A673 (cell line): ENCODE measurements at regions of chr12 and their contacts with region 1.

Region 1: GRCh38 chr12:34198924-34199323 is 176.6 kb downstream of the ALG10 start:
- DNase-seq: no peak
- H3K4me3 ChIP-seq: no peak overlapping the region
- H3K27ac ChIP-seq: no peak overlapping the region
- H3K4me1 ChIP-seq: no peaks in the 10 kb centered on the region
- H3K27me3 ChIP-seq: no peaks in the 10 kb centered on the region
- CTCF ChIP-seq: no peak

Region 2: DNA sequence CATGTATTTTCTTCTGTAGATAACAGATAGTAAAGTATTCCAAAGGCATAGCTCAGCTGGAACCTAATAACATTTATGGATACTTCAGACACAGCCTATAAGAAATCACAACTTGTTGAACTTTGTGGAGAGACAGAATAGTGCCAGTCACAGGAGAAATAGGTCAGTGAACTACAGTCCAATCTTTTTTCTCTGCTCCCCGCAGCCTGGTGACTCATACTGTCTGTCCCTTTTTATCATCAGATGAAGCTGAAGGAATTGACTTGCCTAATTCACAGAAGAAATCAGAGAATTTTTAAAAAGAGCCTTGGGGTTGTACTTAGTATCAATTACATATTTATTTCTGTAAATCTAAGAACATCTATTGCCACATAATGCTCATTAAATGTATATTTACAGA is 45.7 kb after region 1 on chr12:
- CTCF ChIA-PET with region 1: no interaction called
- POLR2A ChIA-PET with region 1: no interaction called
- intact Hi-C with region 1: loop called (anchors 10 kb)
- DNase-seq: no peak
- H3K4me3 ChIP-seq: no peak overlapping the region
- H3K27ac ChIP-seq: no peak overlapping the region
- H3K4me1 ChIP-seq: no peaks in the 10 kb centered on the region
- H3K27me3 ChIP-seq: no peaks in the 10 kb centered on the region
- CTCF ChIP-seq: no peak